Activated naive CD4-positive, alpha-beta T cell treated with anti-CD3 and anti-CD28 coated beads for 36 hours (primary cell): ENCODE measurements at regions of chr16 and their contacts with region 1.

Region 1: DNA sequence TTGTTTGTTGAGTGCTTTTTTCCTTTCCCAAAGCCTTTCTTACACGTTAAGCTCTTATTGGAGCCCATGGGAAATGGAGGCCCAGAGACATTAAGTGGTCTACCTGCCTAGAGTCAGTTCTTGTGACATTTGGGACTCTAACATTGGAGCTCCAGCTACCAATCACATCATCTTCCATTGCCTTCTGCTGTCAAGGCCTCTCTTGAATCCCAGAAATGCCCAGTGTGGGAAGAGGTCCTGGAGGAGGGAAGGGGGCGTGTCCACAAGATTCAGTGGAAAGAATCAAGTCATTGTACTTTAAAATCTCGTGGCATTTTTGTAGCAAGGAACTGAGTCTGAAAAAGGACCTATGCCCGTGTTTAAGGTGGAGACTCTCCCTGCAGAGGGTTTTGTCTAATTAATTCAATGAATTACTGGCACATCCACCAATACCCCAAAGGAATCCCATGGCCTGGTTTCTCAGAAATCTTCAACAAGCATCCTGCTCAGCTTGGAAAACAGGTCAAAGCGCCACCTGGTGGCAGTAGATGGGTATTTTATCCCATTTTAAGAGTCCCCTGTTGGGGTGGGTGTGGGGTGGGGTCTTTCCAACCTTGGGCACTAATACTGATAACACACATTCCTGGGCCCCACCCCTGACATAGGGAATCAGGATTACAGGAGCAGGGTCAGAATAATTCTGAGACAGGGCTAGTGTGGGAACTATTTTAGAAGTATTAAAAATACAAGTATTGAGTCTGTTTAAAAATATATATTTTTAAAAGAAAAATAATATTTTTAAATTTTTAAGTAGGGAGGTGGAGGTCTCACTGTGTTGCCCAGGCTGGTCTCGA is 24.6 kb downstream of the GPT2 start:
- DNase-seq: peak; percentile 72
- H3K4me3 Mint-ChIP-seq: no peak overlapping the region
- H3K27ac Mint-ChIP-seq: no peak overlapping the region
- H3K4me1 Mint-ChIP-seq: peaks cover 10% of the 10 kb centered on the region
- H3K27me3 Mint-ChIP-seq: no peaks in the 10 kb centered on the region

Region 2: GRCh38 chr16:46555951-46556350 is 352.8 kb before region 1 on chr16:
- CTCF ChIA-PET with region 1: no interaction called
- intact Hi-C with region 1: loop called (anchors 2 kb)
- DNase-seq: no peak
- H3K4me3 Mint-ChIP-seq: no peak overlapping the region
- H3K27ac Mint-ChIP-seq: no peak overlapping the region
- H3K4me1 Mint-ChIP-seq: no peaks in the 10 kb centered on the region
- H3K27me3 Mint-ChIP-seq: peaks cover 16% of the 10 kb centered on the region

Region 3: DNA sequence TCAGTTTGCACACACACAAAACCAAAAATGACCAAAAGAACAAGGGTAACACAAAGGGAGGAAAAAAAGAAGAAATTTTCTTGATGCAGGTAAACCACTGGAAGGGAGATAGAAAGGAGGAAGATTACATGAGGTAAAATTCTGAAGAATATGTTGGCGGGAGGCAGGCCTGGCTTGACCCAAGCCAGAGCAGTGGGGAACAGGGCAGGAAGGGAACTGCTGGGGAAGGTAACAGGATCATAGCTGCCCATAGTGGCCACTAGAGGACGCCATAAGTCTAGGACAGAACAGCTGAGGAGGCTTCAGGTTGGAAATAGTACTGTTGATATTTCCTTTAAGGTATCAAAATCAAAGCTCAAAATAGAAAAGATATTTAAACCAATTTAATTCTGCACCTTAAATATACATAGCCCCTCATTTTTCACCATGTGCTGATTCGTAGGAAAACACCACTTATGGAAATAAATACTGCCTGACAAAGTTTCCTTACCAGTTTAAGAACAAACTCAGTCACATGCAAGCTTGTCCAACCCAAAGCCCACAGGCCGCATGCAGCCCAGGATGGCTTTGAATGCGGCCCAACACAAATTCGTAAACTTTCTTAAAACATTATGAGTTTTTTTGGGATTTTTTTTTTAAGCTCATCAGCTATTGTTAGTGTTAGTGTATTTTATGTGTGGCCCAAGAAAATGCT is 235.3 kb before region 1 on chr16:
- CTCF ChIA-PET with region 1: interaction called, 16 read pairs
- intact Hi-C with region 1: loop called (anchors 1 kb)
- DNase-seq: peak; percentile 66
- H3K4me3 Mint-ChIP-seq: no peak overlapping the region
- H3K27ac Mint-ChIP-seq: no peak overlapping the region
- H3K4me1 Mint-ChIP-seq: no peaks in the 10 kb centered on the region
- H3K27me3 Mint-ChIP-seq: no peaks in the 10 kb centered on the region

Region 4: DNA sequence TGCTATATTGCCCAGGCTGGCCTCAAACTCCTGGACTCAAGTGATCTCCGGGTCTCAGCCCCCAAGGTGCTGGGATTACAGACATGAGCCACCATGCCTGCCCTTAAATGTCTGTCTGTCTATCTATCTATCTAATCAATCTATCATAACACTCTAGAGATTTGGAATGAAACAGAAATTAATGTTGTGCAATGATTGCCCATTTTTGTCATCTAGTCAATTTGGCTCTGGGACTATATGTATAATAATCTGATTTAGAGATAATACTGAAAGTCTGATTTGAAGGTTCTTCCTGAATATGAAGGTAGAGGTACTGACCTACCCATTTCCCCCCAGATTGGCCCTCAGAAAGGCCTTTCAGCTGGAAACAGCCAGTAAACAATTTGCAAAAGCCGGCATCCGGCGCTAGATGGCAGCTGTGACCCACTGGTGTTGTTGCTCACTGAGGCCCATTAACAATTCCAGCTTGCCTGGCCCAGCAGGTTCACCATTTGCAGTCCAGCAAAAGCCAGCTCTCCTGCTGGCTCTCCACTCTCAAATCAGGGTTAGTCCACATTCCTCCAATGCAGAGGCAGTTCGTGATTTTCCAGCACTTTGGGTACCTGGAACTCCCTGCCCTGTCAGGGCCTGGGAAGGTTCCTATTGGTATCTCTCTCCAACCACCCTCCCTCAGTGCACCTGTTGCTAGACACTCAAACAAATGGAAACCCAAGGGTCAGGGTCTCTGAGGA is 54.9 kb before region 1 on chr16:
- CTCF ChIA-PET with region 1: interaction called, 58 read pairs
- intact Hi-C with region 1: loop called (anchors 1 kb)
- DNase-seq: peak; percentile 81
- H3K4me3 Mint-ChIP-seq: no peak overlapping the region
- H3K27ac Mint-ChIP-seq: no peak overlapping the region
- H3K4me1 Mint-ChIP-seq: no peaks in the 10 kb centered on the region
- H3K27me3 Mint-ChIP-seq: no peaks in the 10 kb centered on the region

Region 5: GRCh38 chr16:46883690-46884512 is 24.9 kb before region 1 on chr16 and contains the start of gene GPT2:
- CTCF ChIA-PET with region 1: interaction called, 10 read pairs
- intact Hi-C with region 1: no loop called
- DNase-seq: peak; percentile 80
- H3K4me3 Mint-ChIP-seq: peak within 1 kb of the TSS; percentile 78
- H3K27ac Mint-ChIP-seq: peak within 1 kb of the TSS; percentile 68
- H3K4me1 Mint-ChIP-seq: peaks cover 9% of the 10 kb centered on the region
- H3K27me3 Mint-ChIP-seq: peaks cover 19% of the 10 kb centered on the region
- total RNA-seq, gene GPT2: 15.5 to 18.6 TPM

Region 6: GRCh38 chr16:47058295-47059086 is 149.7 kb after region 1 on chr16:
- CTCF ChIA-PET with region 1: no interaction called
- intact Hi-C with region 1: no loop called
- DNase-seq: no peak
- H3K4me3 Mint-ChIP-seq: no peak overlapping the region
- H3K27ac Mint-ChIP-seq: no peak overlapping the region
- H3K4me1 Mint-ChIP-seq: no peaks in the 10 kb centered on the region
- H3K27me3 Mint-ChIP-seq: peaks cover 3% of the 10 kb centered on the region

Region 7: GRCh38 chr16:47477679-47478078 is 568.9 kb after region 1 on chr16:
- CTCF ChIA-PET with region 1: no interaction called
- intact Hi-C with region 1: no loop called
- DNase-seq: no peak
- H3K4me3 Mint-ChIP-seq: no peak overlapping the region
- H3K27ac Mint-ChIP-seq: no peak overlapping the region
- H3K4me1 Mint-ChIP-seq: peaks cover 18% of the 10 kb centered on the region
- H3K27me3 Mint-ChIP-seq: no peaks in the 10 kb centered on the region